ENCODE measurements at regions of chr3 and their contacts with region 1.

Region 1: GRCh38 chr3:159884661-159885402 is 103.8 kb upstream of the IL12A start:
- DNase-seq: peak in 2 of 9 experiments; percentile 22 to 33
- ATAC-seq: no peak
- H3K4me3 ChIP-seq: no peak overlapping the region
- H3K4me3 Mint-ChIP-seq: no peak overlapping the region
- H3K27ac ChIP-seq: no peak overlapping the region
- H3K27ac Mint-ChIP-seq: no peak overlapping the region
- H3K4me1 ChIP-seq: no peaks in the 10 kb centered on the region
- H3K4me1 Mint-ChIP-seq: no peaks in the 10 kb centered on the region
- H3K27me3 ChIP-seq: no peaks in the 10 kb centered on the region
- H3K27me3 Mint-ChIP-seq: peaks cover 3% of the 10 kb centered on the region
- CTCF ChIP-seq: no peak

Region 2: GRCh38 chr3:159907828-159908227 is 23.0 kb after region 1 on chr3:
- CTCF ChIA-PET with region 1: no interaction called
- POLR2A ChIA-PET with region 1: no interaction called
- intact Hi-C with region 1: no loop called
- DNase-seq: no peak
- ATAC-seq: no peak
- H3K4me3 ChIP-seq: no peak overlapping the region
- H3K4me3 Mint-ChIP-seq: no peak overlapping the region
- H3K27ac ChIP-seq: no peak overlapping the region
- H3K27ac Mint-ChIP-seq: no peak overlapping the region
- H3K4me1 ChIP-seq: no peaks in the 10 kb centered on the region
- H3K4me1 Mint-ChIP-seq: peaks cover 12% of the 10 kb centered on the region
- H3K27me3 ChIP-seq: no peaks in the 10 kb centered on the region
- H3K27me3 Mint-ChIP-seq: peaks cover 6% of the 10 kb centered on the region
- CTCF ChIP-seq: no peak

Region 3: GRCh38 chr3:160343132-160343531 is 458.3 kb after region 1 on chr3:
- CTCF ChIA-PET with region 1: no interaction called
- POLR2A ChIA-PET with region 1: no interaction called
- intact Hi-C with region 1: loop called in 1 of 2 experiments (anchors 5 kb)
- DNase-seq: peak in 2 of 9 experiments; percentile 1 to 23
- ATAC-seq: no peak
- H3K4me3 ChIP-seq: no peak overlapping the region
- H3K4me3 Mint-ChIP-seq: no peak overlapping the region
- H3K27ac ChIP-seq: no peak overlapping the region
- H3K27ac Mint-ChIP-seq: no peak overlapping the region
- H3K4me1 ChIP-seq: no peaks in the 10 kb centered on the region
- H3K4me1 Mint-ChIP-seq: no peaks in the 10 kb centered on the region
- H3K27me3 ChIP-seq: no peaks in the 10 kb centered on the region
- H3K27me3 Mint-ChIP-seq: no peaks in the 10 kb centered on the region
- CTCF ChIP-seq: peak; percentile 46